ENCODE measurements at regions of chr6 and their contacts with region 1.

Region 1: GRCh38 chr6:1396952-1397868 is 7.8 kb downstream of the FOXF2 start:
- DNase-seq: peak; percentile 94
- H3K4me3 ChIP-seq: no peak overlapping the region
- H3K27ac ChIP-seq: no peak overlapping the region
- H3K27me3 ChIP-seq: no peaks in the 10 kb centered on the region
- CTCF ChIP-seq: peak; percentile 99

Region 2: GRCh38 chr6:624979-625378 is 772.2 kb before region 1 on chr6:
- CTCF ChIA-PET with region 1: interaction called, 11 read pairs
- POLR2A ChIA-PET with region 1: no interaction called
- DNase-seq: peak; percentile 15
- H3K4me3 ChIP-seq: no peak overlapping the region
- H3K27ac ChIP-seq: no peak overlapping the region
- H3K27me3 ChIP-seq: no peaks in the 10 kb centered on the region
- CTCF ChIP-seq: peak; percentile 42

Region 3: GRCh38 chr6:912871-913835 is 484.1 kb before region 1 on chr6:
- CTCF ChIA-PET with region 1: interaction called, 11 read pairs
- POLR2A ChIA-PET with region 1: no interaction called
- DNase-seq: peak; percentile 8
- H3K4me3 ChIP-seq: no peak overlapping the region
- H3K27ac ChIP-seq: no peak overlapping the region
- H3K27me3 ChIP-seq: peaks cover 5% of the 10 kb centered on the region
- CTCF ChIP-seq: peak; percentile 71

Region 4: GRCh38 chr6:1286972-1287610 is 110.1 kb before region 1 on chr6:
- CTCF ChIA-PET with region 1: no interaction called
- POLR2A ChIA-PET with region 1: no interaction called
- DNase-seq: peak; percentile 63
- H3K4me3 ChIP-seq: no peak overlapping the region
- H3K27ac ChIP-seq: peak overlapping the region; percentile 49
- H3K27me3 ChIP-seq: no peaks in the 10 kb centered on the region
- CTCF ChIP-seq: no peak

Region 5: DNA sequence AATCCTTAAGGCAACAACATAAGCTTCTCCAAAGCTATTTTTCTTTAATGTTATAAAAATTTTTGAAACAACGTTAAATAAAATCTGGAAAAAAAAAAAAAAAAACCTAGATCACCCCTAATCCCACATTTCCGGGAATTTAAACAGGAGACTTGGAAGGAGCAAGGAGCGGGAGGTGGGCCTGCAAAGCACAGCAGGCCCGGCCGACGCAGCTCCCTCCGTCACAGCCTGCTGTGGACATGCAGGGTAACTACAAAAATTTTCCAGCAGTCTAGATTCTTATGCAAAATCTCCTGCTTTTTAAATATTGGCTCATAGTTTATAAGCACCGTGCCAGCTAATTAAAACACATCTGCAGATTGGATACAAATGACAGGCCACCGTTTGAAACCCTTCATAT is 15.7 kb after region 1 on chr6:
- CTCF ChIA-PET with region 1: interaction called, 17 read pairs
- POLR2A ChIA-PET with region 1: interaction called, 5 read pairs
- DNase-seq: no peak
- H3K4me3 ChIP-seq: no peak overlapping the region
- H3K27ac ChIP-seq: no peak overlapping the region
- H3K27me3 ChIP-seq: no peaks in the 10 kb centered on the region
- CTCF ChIP-seq: no peak

Region 6: DNA sequence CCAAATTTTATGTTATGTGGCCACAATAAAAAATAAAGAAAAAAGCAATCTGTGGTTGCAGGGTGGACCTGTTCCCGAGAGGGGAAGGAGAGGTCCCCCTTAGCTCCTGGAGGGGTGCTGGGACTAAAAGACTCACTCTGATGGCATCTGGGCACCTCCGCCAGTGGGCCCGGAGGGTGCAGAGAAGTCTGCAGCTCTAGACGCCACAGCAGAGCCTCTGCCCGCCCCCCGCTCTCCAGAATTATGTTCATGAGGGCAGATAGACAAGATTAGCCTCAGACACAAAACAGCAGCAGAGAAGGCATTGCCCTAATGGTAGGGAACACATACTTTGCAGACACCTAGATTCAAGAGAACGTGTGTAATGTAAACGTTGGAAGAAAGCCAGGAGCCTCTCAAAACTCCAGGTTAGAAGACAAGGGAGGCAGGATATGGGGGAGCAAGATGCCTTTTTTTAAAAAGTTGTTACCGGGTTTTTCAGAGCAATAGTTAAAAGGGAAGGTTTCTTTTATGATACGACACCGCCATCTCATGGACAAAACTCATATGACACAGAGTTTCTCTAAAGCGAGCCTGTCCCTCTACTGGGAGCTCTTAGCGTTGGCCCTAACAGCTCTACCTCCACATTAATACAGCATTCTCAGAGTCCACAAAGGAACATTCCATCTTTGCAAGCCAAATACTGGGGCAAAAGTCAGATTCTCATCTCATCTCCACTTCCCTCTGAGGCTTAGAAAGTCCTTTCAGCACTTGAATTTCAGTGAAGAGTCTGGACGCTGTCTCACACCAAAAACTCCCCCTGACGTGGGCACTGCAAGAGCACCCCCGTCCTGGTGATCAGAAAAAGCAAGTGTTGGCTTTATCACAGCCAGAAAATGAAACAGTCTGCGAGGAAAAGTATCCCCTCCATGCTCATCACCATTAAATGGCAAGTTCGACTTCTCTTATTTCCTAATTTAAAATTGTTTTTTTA is 39.4 kb after region 1 on chr6:
- CTCF ChIA-PET with region 1: interaction called, 10 read pairs
- POLR2A ChIA-PET with region 1: no interaction called
- DNase-seq: peak; percentile 36
- H3K4me3 ChIP-seq: no peak overlapping the region
- H3K27ac ChIP-seq: no peak overlapping the region
- H3K27me3 ChIP-seq: peaks cover 11% of the 10 kb centered on the region
- CTCF ChIP-seq: peak; percentile 78